Heart right ventricle (tissue), 16 donors: ENCODE measurements at regions of chr12 and their contacts with region 1.

Region 1: GRCh38 chr12:118061011-118061875 is at the start of gene WSB2:
- DNase-seq: peak; percentile 84 to 91
- ATAC-seq: peak; percentile 58 to 80 (median 76)
- H3K4me3 ChIP-seq: peak within 1 kb of the TSS; percentile 71 to 94 (median 84)
- H3K27ac ChIP-seq: peak within 1 kb of the TSS; percentile 93 to 99 (median 98)
- H3K4me1 ChIP-seq: peaks cover 0 to 70% (median 35%) of the 10 kb centered on the region in 9 donors
- H3K27me3 ChIP-seq: no peaks in the 10 kb centered on the region
- CTCF ChIP-seq: no peak
- total RNA-seq, gene WSB2: 89.8 to 125 (median 98.2) TPM

Region 2: GRCh38 chr12:117486840-117487659 is 574.2 kb before region 1 on chr12:
- intact Hi-C with region 1: no loop called
- DNase-seq: peak in 1 of 2 donors; percentile 24
- ATAC-seq: peak in 4 of 8 donors; percentile 56 to 97 (median 83)
- H3K4me3 ChIP-seq: no peak overlapping the region
- H3K27ac ChIP-seq: no peak overlapping the region
- H3K4me1 ChIP-seq: peaks cover 0 to 9% (median 0%) of the 10 kb centered on the region in 9 donors
- H3K27me3 ChIP-seq: peaks cover 0 to 6% (median 0%) of the 10 kb centered on the region in 7 donors
- CTCF ChIP-seq: no peak

Region 3: DNA sequence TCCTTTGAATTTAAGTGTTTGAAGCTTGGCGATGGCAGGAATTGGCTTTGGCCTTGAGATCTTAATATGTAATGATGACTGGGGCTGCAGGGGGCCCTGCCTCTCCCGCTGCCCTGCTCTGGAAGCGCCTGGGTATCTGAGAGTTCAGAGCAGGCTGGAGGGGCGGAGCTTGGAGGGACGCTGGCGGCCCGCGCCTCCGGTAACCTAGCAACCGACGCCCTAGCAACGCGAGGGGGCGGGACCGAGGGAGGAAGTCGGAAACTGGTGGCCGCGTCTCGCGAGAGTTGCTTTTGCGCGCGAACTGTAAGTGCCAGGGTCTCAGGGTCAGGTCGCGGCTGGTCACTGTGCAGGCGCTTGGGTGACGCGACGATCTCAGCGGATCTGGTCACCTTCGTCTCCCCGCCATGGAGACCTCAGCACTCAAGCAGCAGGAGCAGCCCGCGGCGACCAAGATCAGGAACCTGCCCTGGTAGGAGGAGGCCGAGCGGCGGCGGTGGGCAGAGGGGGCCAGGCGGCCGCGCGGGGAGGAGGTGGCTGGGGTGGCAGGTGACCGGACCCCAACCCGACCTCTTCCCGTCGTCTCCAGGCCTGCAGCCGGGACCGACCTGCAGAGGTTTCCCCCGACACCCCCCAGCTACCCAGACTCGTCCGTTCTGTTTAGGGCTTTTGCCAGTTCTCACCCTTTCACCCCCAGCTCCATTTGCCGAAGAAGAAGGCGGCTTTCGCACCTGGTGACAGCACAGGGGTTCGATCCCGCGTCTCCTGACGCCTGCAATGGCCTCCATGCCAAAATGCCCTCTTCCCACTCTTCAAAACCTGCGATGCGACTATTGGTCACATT is 44.6 kb before region 1 on chr12 and contains the start of gene RFC5:
- intact Hi-C with region 1: loop called in 1 of 10 experiments (anchors 5 kb)
- DNase-seq: peak; percentile 98 to 99
- ATAC-seq: peak; percentile 99 to 100 (median 100)
- H3K4me3 ChIP-seq: peak within 1 kb of the TSS; percentile 75 to 98 (median 93)
- H3K27ac ChIP-seq: peak within 1 kb of the TSS in 6 of 10 donors; percentile 51 to 85 (median 68)
- H3K4me1 ChIP-seq: peaks cover 0 to 17% (median 9%) of the 10 kb centered on the region in 9 donors
- H3K27me3 ChIP-seq: no peaks in the 10 kb centered on the region
- CTCF ChIP-seq: peak in 1 of 9 donors; percentile 13
- total RNA-seq, gene RFC5: 2.8 to 6.2 (median 4.1) TPM

Region 4: GRCh38 chr12:118103604-118104382 is 42.5 kb after region 1 on chr12 and contains the start of gene VSIG10:
- intact Hi-C with region 1: loop called in 8 of 10 experiments (anchors 2 to 5 kb)
- DNase-seq: peak; percentile 71 to 79
- ATAC-seq: peak; percentile 93 to 97 (median 96)
- H3K4me3 ChIP-seq: peak within 1 kb of the TSS; percentile 62 to 90 (median 83)
- H3K27ac ChIP-seq: peak within 1 kb of the TSS; percentile 18 to 90 (median 80)
- H3K4me1 ChIP-seq: peaks cover 0 to 20% (median 14%) of the 10 kb centered on the region in 9 donors
- H3K27me3 ChIP-seq: peaks cover 0 to 8% (median 0%) of the 10 kb centered on the region in 7 donors
- CTCF ChIP-seq: peak in 1 of 9 donors; percentile 22
- total RNA-seq, gene VSIG10: 9.2 to 13.7 (median 10.3) TPM

Region 5: GRCh38 chr12:118135788-118136558 is 74.7 kb after region 1 on chr12 and contains the start of gene PEBP1:
- intact Hi-C with region 1: loop called in 4 of 10 experiments (anchors 5 to 10 kb)
- DNase-seq: peak; percentile 95 to 97
- ATAC-seq: peak; percentile 98 to 100 (median 99)
- H3K4me3 ChIP-seq: peak within 1 kb of the TSS; percentile 62 to 97 (median 92)
- H3K27ac ChIP-seq: peak within 1 kb of the TSS; percentile 60 to 95 (median 88)
- H3K4me1 ChIP-seq: peaks cover 0 to 41% (median 20%) of the 10 kb centered on the region in 9 donors
- H3K27me3 ChIP-seq: no peaks in the 10 kb centered on the region
- CTCF ChIP-seq: peak in 2 of 9 donors; percentile 13 to 27
- total RNA-seq, gene PEBP1: 310 to 552 (median 467) TPM

Region 6: DNA sequence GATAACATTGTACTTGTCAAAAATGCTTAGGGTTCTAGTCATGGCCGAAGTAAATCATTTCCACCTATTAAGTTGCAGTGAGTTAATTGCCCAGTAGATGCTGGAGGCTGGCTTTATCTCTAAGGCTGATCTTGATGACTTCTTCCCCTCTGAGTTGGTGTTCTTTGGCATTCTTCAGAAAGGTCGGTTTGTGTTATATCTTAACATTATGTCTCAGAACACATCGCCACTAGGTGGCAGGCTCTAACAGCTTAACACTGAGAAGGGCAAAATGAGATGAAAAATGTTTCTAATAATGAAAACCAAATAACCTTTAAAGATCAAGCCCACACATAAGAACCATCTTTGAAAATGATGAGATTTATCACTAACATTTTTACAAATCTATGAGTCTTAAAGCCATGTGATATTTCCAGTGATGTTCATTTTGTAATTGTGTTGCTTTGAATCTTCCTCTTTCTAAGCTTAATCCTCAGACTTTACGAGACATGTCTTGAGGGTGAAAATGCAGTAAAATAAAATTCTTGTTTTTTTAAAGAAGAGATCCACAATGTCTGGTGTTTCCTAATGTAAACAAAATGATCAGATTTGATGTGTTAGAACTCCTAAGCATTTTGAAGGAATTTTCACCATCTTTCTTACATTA is 343.8 kb after region 1 on chr12:
- intact Hi-C with region 1: no loop called
- DNase-seq: peak in 1 of 2 donors; percentile 48
- ATAC-seq: no peak
- H3K4me3 ChIP-seq: no peak overlapping the region
- H3K27ac ChIP-seq: no peak overlapping the region
- H3K4me1 ChIP-seq: peaks cover 0 to 4% (median 0%) of the 10 kb centered on the region in 9 donors
- H3K27me3 ChIP-seq: no peaks in the 10 kb centered on the region
- CTCF ChIP-seq: peak; percentile 55 to 83 (median 75)